ENCODE measurements at regions of chr9 and their contacts with region 1.

Region 1: GRCh38 chr9:69421908-69422801 is 97.1 kb downstream of the ENTREP1 start:
- DNase-seq: peak; percentile 83
- H3K4me3 Mint-ChIP-seq: no peak overlapping the region
- H3K27ac Mint-ChIP-seq: no peak overlapping the region
- H3K4me1 Mint-ChIP-seq: peaks cover 2% of the 10 kb centered on the region
- H3K27me3 Mint-ChIP-seq: peaks cover 9% of the 10 kb centered on the region

Region 2: DNA sequence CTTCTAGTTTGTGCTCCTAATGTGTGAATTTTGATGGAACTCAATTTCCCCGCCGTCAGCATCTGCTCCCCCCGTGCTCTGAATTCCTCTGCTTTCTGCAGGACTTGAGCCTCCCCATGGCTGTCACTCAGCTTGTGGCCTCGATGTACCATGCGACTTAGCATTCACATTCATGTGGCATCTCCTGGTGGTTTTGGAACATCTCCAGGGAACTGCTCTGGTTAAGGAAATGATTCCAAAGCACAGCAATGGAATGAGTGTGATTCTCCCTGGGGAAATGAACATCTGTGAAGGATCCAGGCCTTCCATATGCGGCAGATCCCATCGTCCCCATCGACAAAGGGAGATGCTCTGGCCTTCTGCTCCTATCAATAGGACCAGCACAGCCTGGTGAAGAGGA is 21.9 kb after region 1 on chr9:
- intact Hi-C with region 1: no loop called
- DNase-seq: no peak
- H3K4me3 Mint-ChIP-seq: no peak overlapping the region
- H3K27ac Mint-ChIP-seq: no peak overlapping the region
- H3K4me1 Mint-ChIP-seq: peaks cover 13% of the 10 kb centered on the region
- H3K27me3 Mint-ChIP-seq: peaks cover 4% of the 10 kb centered on the region

Region 3: GRCh38 chr9:69549310-69550202 is 127.4 kb after region 1 on chr9:
- intact Hi-C with region 1: loop called (anchors 1 kb)
- DNase-seq: peak; percentile 76
- H3K4me3 Mint-ChIP-seq: no peak overlapping the region
- H3K27ac Mint-ChIP-seq: no peak overlapping the region
- H3K4me1 Mint-ChIP-seq: peaks cover 4% of the 10 kb centered on the region
- H3K27me3 Mint-ChIP-seq: peaks cover 31% of the 10 kb centered on the region

Region 4: GRCh38 chr9:69877854-69878514 is 455.8 kb after region 1 on chr9:
- intact Hi-C with region 1: loop called (anchors 2 kb)
- DNase-seq: no peak
- H3K4me3 Mint-ChIP-seq: no peak overlapping the region
- H3K27ac Mint-ChIP-seq: no peak overlapping the region
- H3K4me1 Mint-ChIP-seq: no peaks in the 10 kb centered on the region
- H3K27me3 Mint-ChIP-seq: peaks cover 18% of the 10 kb centered on the region

Region 5: DNA sequence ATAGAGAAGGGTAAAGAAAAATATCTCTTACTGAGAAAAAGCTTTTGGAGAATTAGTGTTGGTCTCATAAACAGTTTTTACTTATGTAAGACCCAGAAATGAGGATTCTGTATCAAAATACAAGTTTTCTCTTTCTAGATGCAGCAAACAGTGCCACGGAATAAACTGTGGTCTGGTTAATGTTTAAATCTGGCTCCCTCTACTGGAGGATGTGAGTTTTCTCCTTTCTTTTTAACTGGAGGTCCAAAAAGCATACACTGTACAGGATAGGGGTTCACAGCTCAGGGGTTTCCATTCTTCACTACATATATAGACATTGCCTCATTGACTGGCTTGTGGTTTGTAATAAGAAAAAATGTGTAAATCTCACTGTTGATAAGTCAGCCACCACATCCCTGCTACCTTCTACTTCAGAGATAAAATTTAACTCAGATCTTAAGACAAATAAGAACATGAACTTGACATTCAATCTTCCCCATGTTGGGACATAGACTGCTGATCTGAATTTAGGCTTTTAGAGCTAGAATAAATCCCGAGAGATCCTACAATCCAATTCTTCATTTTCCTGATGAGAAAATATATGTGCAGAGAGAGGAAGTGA is 497.4 kb after region 1 on chr9:
- intact Hi-C with region 1: loop called (anchors 1 kb)
- DNase-seq: peak; percentile 68
- H3K4me3 Mint-ChIP-seq: no peak overlapping the region
- H3K27ac Mint-ChIP-seq: no peak overlapping the region
- H3K4me1 Mint-ChIP-seq: no peaks in the 10 kb centered on the region
- H3K27me3 Mint-ChIP-seq: peaks cover 18% of the 10 kb centered on the region

Region 6: DNA sequence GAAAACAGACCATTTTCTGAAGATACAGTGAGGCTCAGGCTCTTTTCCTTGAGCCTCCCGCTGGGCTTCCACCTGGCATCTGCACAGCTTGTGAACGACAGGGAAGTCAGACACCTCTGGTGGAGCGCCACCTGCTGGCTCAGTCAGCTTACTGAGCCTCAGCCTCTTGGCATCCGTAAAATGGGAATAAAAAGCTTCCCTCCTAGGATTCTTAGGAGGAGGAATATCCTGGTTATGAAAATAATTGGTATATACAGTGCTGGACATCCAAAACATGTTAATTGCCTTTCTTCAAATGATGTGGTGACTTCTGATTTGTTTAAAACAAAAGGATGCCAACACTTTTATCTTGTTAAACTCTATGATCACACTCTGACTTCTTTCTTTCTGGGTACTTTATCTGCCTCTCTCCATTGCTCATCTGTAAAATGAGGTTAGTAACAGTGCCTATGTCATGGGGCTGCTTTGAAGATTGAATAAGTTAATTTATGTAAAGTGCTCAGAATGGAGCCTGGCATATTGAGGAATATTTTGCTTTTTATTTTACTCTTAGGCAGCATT is 689.0 kb after region 1 on chr9:
- intact Hi-C with region 1: loop called (anchors 5 kb)
- DNase-seq: peak; percentile 85
- H3K4me3 Mint-ChIP-seq: no peak overlapping the region
- H3K27ac Mint-ChIP-seq: no peak overlapping the region
- H3K4me1 Mint-ChIP-seq: peaks cover 3% of the 10 kb centered on the region
- H3K27me3 Mint-ChIP-seq: peaks cover 9% of the 10 kb centered on the region

Measured in activated CD4-positive, alpha-beta T cell treated with anti-CD3 and anti-CD28 coated beads, Interleukin-2, amount 10 ng/mL, durations not matched to agents 24 days and 14 days (primary cell).